ENCODE measurements at regions of chr16 and their contacts with region 1.

Region 1: DNA sequence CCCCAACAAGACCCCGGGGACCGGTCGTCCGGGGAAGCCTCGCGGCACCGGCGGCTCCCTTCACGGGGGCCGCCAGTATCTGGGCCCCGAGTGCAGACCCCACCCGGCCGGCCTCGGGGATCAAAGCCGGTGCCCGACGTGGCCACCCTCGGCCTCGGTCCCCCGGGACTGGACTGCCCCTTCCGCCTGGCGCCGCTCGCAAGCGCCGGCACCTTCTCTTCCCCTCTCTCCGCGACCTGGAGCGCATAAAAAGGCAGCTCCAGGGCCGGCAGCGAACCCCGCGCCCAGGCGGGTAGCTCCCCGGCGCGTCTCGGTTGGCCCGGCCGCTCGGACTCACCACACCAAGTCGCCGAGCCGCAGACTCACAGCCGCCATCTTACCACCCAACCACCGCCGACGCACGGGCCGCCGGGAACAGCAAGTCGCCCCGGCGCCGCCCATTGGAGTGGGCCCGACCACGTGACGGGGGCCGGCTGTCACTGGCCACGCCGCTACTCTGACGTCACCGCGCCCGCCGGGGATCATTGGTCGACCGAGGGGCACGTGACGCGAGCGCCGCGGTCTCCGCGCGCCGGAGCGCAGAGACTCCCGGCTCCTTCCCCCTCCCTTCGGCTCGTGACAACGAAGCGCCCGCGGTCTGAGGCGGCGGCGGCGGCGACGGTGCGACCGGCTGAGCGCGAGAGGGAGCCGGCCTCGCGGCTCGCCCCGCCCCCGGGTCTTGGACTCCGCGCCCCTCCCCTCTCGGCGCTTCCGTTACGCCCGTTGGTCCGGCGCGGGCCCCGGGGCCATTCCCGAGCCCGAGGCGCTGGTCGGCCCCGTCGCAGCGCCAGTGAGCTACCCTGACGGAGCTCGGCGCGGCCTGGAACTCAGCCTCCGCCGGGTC is at the starts of genes GLYR1 and UBN1:
- DNase-seq: peak; percentile 100
- ATAC-seq: peak; percentile 96
- H3K4me3 Mint-ChIP-seq: peak within 1 kb of the TSS; percentile 77
- H3K27ac Mint-ChIP-seq: peak within 1 kb of the TSS; percentile 84
- H3K4me1 Mint-ChIP-seq: peaks cover 54% of the 10 kb centered on the region
- H3K27me3 Mint-ChIP-seq: no peaks in the 10 kb centered on the region
- total RNA-seq, gene GLYR1: 76.9 to 78.4 TPM
- total RNA-seq, gene UBN1: 19.3 to 23.0 TPM

Region 2: GRCh38 chr16:4425378-4426020 is 421.6 kb before region 1 on chr16 and contains the start of gene DNAJA3:
- CTCF ChIA-PET with region 1: interaction called, 3 read pairs
- POLR2A ChIA-PET with region 1: no interaction called
- intact Hi-C with region 1: loop called in 1 of 2 experiments (anchors 1 kb)
- DNase-seq: peak; percentile 96
- ATAC-seq: peak; percentile 93
- H3K4me3 Mint-ChIP-seq: peak within 1 kb of the TSS; percentile 95
- H3K27ac Mint-ChIP-seq: peak within 1 kb of the TSS; percentile 98
- H3K4me1 Mint-ChIP-seq: peaks cover 27% of the 10 kb centered on the region
- H3K27me3 Mint-ChIP-seq: no peaks in the 10 kb centered on the region
- total RNA-seq, gene DNAJA3: 93.9 to 102 TPM

Region 3: DNA sequence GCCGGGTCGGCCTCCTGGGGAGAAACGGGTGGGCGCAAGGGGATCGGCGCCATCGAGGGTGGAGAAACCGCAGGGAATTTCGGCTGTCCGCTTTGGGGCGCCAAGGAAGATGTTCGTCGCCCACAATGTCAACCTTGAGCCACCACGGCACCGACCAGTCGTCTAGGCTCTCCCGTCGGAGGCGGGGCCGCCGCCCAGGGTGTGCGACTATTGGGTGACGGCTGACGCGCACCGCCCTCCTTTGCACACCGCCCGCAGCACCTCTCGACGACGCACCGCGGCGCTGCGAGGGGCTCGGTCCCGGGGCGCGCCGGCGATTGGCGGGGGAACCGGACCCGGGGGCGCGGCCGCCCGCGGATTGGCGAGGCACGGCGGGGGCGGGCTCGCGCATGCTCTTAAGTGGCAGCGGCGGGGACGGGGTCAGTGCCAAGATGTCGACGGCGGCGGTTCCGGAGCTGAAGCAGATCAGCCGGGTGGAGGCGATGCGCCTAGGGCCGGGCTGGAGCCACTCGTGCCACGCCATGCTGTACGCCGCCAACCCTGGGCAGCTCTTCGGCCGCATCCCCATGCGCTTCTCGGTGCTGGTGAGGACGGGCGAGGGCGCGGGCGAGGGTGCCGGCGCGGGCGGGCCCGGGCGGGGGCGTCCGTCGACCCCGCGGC is 153.7 kb before region 1 on chr16 and contains the start of gene NUDT16L1:
- CTCF ChIA-PET with region 1: no interaction called
- POLR2A ChIA-PET with region 1: no interaction called
- intact Hi-C with region 1: loop called in 1 of 2 experiments (anchors 1 kb)
- DNase-seq: peak; percentile 98
- ATAC-seq: peak; percentile 95
- H3K4me3 Mint-ChIP-seq: peak within 1 kb of the TSS; percentile 77
- H3K27ac Mint-ChIP-seq: peak within 1 kb of the TSS; percentile 83
- H3K4me1 Mint-ChIP-seq: peaks cover 17% of the 10 kb centered on the region
- H3K27me3 Mint-ChIP-seq: no peaks in the 10 kb centered on the region
- total RNA-seq, gene NUDT16L1: 16.4 to 22.5 TPM

Region 4: DNA sequence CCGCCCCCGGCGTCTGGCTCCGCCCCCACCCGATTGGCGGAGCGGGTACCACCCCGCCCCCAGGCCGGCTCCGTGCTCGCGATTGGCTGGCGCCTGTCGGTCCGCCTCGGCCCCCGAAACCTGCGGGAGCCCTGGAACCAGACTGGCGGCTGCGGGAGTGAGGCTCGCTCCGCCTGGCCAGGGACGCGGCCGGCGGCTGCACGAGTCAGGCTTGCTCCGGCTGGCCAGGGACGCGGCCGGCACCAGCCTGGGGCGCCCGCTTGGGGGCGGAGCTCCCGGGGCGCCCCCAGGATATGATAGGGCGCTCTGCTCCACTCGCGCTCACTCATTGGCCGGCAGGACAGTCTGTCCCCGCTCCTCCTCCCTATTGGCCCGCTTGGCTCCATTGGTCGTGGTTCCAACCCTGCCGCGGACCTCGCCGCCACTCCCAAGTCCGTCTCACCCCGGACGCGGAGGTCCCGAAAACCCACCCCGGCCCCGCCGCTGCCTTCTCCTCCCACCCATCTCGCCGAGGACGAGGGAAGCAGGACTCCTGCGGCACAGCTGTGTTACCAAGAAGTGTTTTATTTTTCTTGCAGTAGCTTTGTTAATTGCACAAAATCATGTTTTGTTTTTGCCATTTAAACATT is 44.4 kb before region 1 on chr16:
- CTCF ChIA-PET with region 1: no interaction called
- POLR2A ChIA-PET with region 1: no interaction called
- intact Hi-C with region 1: loop called (anchors 1 to 5 kb)
- DNase-seq: peak; percentile 92
- ATAC-seq: peak; percentile 98
- H3K4me3 Mint-ChIP-seq: peak overlapping the region; percentile 74
- H3K27ac Mint-ChIP-seq: peak overlapping the region; percentile 58
- H3K4me1 Mint-ChIP-seq: peaks cover 14% of the 10 kb centered on the region
- H3K27me3 Mint-ChIP-seq: no peaks in the 10 kb centered on the region

Region 5: GRCh38 chr16:5033256-5034169 is 186.4 kb after region 1 on chr16 and contains the start of gene NAGPA:
- CTCF ChIA-PET with region 1: interaction called, 3 read pairs
- POLR2A ChIA-PET with region 1: no interaction called
- intact Hi-C with region 1: loop called in 1 of 2 experiments (anchors 1 kb)
- DNase-seq: peak; percentile 93
- ATAC-seq: peak; percentile 96
- H3K4me3 Mint-ChIP-seq: peak within 1 kb of the TSS; percentile 85
- H3K27ac Mint-ChIP-seq: peak within 1 kb of the TSS; percentile 80
- H3K4me1 Mint-ChIP-seq: peaks cover 19% of the 10 kb centered on the region
- H3K27me3 Mint-ChIP-seq: no peaks in the 10 kb centered on the region
- total RNA-seq, gene NAGPA: 8.9 to 10.2 TPM

Region 6: GRCh38 chr16:5305023-5305422 is 457.9 kb after region 1 on chr16:
- CTCF ChIA-PET with region 1: no interaction called
- POLR2A ChIA-PET with region 1: no interaction called
- intact Hi-C with region 1: no loop called
- DNase-seq: no peak
- ATAC-seq: no peak
- H3K4me3 Mint-ChIP-seq: no peak overlapping the region
- H3K27ac Mint-ChIP-seq: no peak overlapping the region
- H3K4me1 Mint-ChIP-seq: no peaks in the 10 kb centered on the region
- H3K27me3 Mint-ChIP-seq: peaks cover 16% of the 10 kb centered on the region

Measured in activated CD4-positive, alpha-beta T cell treated with anti-CD3 and anti-CD28 coated beads for 36 hours (primary cell).